Sciatic nerve (tissue), 2 donors: ENCODE measurements at regions of chr1 and their contacts with region 1.

Region 1: GRCh38 chr1:66533804-66534740 is at the start of gene SGIP1:
- DNase-seq: peak; percentile 65
- ATAC-seq: peak; percentile 95
- total RNA-seq, gene SGIP1: 7.0 TPM

Region 2: DNA sequence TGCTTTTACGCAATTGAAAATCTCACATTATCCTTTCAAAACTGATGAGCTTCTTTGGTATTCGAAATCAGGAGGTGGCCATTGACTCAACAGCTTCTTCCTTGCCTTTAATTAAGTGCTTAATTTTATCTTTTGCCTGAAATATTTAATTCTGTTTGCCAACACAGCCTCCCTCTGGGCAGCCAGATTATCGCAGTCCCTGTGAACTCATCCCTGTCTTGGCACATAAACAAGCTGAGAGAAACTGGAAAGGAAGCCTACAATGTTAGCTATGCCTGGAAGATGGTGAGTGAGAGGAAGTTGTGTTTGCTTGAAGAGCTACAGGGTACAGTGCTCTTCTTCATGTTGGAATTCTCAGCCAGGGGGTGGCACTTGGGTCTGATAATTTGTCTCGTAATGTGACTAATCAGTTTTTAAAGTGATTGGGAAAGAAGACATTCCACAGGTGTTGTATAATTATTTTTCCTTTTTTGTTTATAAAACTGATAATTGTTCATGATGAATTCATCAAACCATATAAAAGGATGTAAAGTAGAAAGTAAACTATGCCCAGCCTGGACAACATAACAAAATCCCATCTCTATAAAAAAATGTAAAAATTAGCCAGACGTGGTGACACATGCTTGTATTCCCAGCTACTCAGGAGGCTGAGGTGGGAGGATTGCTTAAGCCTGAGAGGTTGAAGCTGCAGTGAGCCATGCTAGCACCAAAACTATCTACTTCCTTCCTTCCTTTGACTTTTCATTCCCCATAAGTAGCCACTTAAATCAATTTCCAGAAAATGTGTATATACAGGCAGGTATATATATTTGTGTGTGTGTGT is 1879.3 kb before region 1 on chr1:
- intact Hi-C with region 1: loop called (anchors 5 kb)
- DNase-seq: no peak
- ATAC-seq: no peak